ENCODE measurements at regions of chr12 and their contacts with region 1.

Region 1: GRCh38 chr12:27840244-27840999 is 60.4 kb upstream of the MANSC4 start:
- DNase-seq: no peak
- H3K4me3 ChIP-seq: no peak overlapping the region
- CTCF ChIP-seq: peak; percentile 32

Region 2: DNA sequence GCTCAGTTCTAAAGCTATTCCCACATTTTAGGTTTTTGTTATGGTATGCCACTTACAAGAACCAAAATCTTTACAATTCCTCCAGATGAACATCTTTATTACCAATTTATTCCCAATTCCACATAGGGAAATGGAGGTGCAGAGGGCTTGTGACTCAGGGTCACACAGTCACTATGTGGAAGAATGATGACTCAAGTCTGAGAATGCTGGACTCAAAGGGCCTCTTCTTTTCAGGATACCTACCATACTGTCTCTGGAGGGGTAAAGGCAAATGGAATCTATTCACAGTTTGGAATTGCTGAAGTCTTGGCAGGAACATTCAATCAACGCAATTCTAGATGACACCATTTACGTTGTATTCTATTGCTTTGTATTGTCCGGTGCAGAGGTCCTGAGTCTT is 12.2 kb before region 1 on chr12:
- CTCF ChIA-PET with region 1: interaction called, 22 read pairs
- POLR2A ChIA-PET with region 1: no interaction called
- DNase-seq: no peak
- H3K4me3 ChIP-seq: no peak overlapping the region
- CTCF ChIP-seq: no peak

Region 3: GRCh38 chr12:27852742-27853141 is 12.3 kb after region 1 on chr12:
- CTCF ChIA-PET with region 1: interaction called, 17 read pairs
- POLR2A ChIA-PET with region 1: no interaction called
- DNase-seq: no peak
- H3K4me3 ChIP-seq: no peak overlapping the region
- CTCF ChIP-seq: no peak

Region 4: GRCh38 chr12:27879708-27880107 is 39.3 kb after region 1 on chr12:
- CTCF ChIA-PET with region 1: no interaction called
- POLR2A ChIA-PET with region 1: no interaction called
- DNase-seq: no peak
- H3K4me3 ChIP-seq: no peak overlapping the region
- CTCF ChIP-seq: no peak

Region 5: DNA sequence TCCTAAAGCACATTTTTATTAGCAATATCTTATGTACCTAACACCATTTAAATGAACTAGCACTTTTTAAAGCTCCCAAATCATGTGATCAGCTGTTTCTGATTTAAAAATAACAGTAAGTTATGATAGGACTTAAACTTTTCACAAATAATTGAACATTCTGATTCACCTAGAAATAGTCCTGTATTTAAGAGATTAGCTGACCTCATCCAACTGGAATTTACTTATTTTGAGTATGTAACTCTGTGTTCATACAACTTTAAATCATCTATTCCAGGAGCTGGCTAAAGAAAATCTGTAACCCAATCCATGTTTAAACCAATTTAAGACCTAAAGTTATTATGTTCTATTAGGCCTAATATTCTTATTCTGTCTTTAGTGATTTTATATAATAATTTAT is 534.1 kb after region 1 on chr12:
- CTCF ChIA-PET with region 1: no interaction called
- POLR2A ChIA-PET with region 1: no interaction called
- DNase-seq: peak; percentile 16
- H3K4me3 ChIP-seq: no peak overlapping the region
- CTCF ChIP-seq: no peak